HepG2 (cell line): ENCODE measurements at regions of chr9 and their contacts with region 1.

Region 1: GRCh38 chr9:129495534-129496325 is 125.2 kb downstream of the C9orf50 start:
- DNase-seq: peak; percentile 86
- ATAC-seq: peak; percentile 75
- H3K4me3 ChIP-seq: peak overlapping the region; percentile 56 to 79 (median 61)
- H3K27ac ChIP-seq: peak overlapping the region; percentile 92
- H3K4me1 ChIP-seq: peaks cover 79% of the 10 kb centered on the region
- H3K27me3 ChIP-seq: no peaks in the 10 kb centered on the region
- CTCF ChIP-seq: peak; percentile 50
- EP300 ChIP-seq: no peak
- POLR2A ChIP-seq: no peak; a peak in 1 of 4 replicates
- RAD21 ChIP-seq: peak; percentile 30; the same call in 1 of the 2 replicates

Region 2: DNA sequence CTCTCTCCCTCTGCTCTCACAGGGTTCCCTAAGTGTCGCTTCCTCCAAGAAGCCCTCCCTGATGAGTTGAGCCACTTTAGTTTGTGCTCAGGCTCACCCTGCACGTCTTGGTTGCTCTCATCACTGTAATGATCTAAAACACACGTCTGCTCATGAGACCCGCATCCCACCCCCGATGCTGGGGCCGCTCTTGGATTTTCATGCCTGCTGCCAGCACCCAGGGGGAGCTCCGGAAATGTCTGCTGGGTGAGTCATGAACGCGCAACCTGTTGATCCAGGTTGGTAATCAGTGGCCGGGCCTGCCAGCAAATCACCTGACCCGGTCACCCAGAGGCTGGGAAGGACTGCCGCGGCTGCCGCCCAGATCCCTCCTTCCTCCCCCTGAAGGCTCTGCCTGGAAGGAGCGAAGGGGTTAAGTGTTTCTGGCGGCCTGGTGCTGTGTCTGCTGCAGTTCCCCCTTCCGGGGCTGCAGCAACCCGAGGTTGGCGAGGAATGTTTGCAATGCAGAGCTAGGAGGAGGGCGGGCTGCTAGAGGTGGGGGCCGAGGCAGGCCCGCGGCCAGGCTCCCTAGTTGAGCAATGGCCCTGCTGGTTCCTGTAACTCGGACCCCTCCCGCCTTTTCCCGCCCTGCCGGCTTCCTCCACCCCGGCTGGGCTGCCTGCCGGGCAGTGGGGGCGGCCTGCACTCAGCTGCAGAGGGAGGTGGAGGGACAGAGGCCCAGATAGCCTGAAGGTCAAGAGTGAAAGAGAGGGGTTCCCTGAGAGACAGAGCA is 161.6 kb before region 1 on chr9:
- CTCF ChIA-PET with region 1: no interaction called
- POLR2A ChIA-PET with region 1: interaction called, 22 read pairs
- in situ Hi-C with region 1: no loop called
- intact Hi-C with region 1: no loop called
- DNase-seq: peak; percentile 94
- ATAC-seq: peak; percentile 93
- H3K4me3 ChIP-seq: peak overlapping the region in 2 of 3 experiments; percentile 30 to 65; a peak in 4 of 6 replicates
- H3K27ac ChIP-seq: peak overlapping the region; percentile 93
- H3K4me1 ChIP-seq: peaks cover 56% of the 10 kb centered on the region
- H3K27me3 ChIP-seq: no peaks in the 10 kb centered on the region
- CTCF ChIP-seq: peak; percentile 47; the same call in 1 of the 2 replicates
- EP300 ChIP-seq: peak in 1 of 2 experiments; percentile 84; a peak in 2 of 4 replicates
- POLR2A ChIP-seq: no peak
- RAD21 ChIP-seq: peak; percentile 75

Region 3: DNA sequence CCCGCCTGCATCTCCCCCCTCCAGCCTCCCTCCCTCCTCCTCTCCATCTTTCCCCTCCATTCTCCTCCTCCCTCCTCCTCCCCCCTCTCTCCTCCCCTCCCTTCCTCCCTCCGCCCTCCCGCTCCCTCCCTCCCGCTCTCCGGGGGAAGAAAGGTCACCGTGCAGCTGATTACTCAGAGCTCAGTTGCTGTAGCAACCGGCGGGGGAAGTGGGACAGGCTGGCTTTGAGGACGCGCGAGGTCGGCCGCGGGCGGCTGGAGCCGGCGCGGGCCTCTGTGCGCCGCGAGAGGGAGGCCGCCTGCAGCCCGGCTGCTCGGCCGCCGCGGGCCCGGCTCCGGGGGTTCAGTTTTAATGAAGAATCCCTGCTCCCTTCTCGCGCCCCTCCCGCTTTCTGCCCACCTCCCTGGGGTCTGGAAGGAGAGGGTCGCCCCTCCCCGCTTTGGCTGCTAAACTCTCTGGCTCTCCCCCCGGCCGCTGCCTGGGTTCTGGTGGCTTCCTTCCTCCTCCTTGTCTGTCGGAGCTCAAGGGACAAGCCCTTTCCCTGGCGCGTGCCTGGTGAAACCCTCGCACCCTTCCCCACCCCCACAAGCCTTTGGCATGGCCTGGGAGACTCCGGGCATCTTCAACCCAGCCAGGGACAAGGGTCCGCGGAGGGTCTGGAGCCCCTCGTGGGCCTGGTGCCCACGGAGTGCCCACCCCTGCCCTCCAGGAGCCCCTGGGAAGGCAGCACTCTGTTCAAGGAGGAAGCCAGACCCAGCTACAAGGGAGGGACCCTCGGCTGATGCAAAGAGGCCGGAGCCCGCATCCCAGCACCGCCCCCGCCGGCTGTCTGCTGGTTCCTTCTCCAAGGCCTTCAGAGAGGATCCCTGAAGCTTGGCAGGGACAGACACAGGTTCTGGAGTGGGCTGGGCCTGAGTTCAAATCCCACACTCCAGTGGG is 35.1 kb before region 1 on chr9:
- CTCF ChIA-PET with region 1: no interaction called
- POLR2A ChIA-PET with region 1: interaction called, 53 read pairs
- in situ Hi-C with region 1: no loop called
- intact Hi-C with region 1: no loop called
- DNase-seq: peak; percentile 94
- ATAC-seq: peak; percentile 82
- H3K4me3 ChIP-seq: peak overlapping the region; percentile 49 to 78 (median 57)
- H3K27ac ChIP-seq: peak overlapping the region; percentile 73
- H3K4me1 ChIP-seq: peaks cover 47% of the 10 kb centered on the region
- H3K27me3 ChIP-seq: peaks cover 4 to 10% of the 10 kb centered on the region in 2 experiments; a peak in 3 of 5 replicates
- CTCF ChIP-seq: peak; percentile 18; the same call in 1 of the 2 replicates
- EP300 ChIP-seq: peak in 1 of 2 experiments; percentile 78; a peak in 3 of 4 replicates
- POLR2A ChIP-seq: peak; percentile 58 to 60; a peak in 3 of 4 replicates
- RAD21 ChIP-seq: peak; percentile 78

Region 4: GRCh38 chr9:129557192-129558036 is 61.7 kb after region 1 on chr9:
- CTCF ChIA-PET with region 1: no interaction called
- POLR2A ChIA-PET with region 1: interaction called, 134 read pairs
- in situ Hi-C with region 1: no loop called
- intact Hi-C with region 1: loop called (anchors 5 kb)
- DNase-seq: peak; percentile 97
- ATAC-seq: peak; percentile 82
- H3K4me3 ChIP-seq: peak overlapping the region; percentile 8 to 65 (median 44); a peak in 5 of 6 replicates
- H3K27ac ChIP-seq: peak overlapping the region; percentile 95
- H3K4me1 ChIP-seq: peaks cover 97% of the 10 kb centered on the region
- H3K27me3 ChIP-seq: no peaks in the 10 kb centered on the region
- CTCF ChIP-seq: 0 out of 2 replicates have a peak, but pooled peaks have one; percentile 5
- EP300 ChIP-seq: peak; percentile 78 to 98; a peak in 3 of 4 replicates
- POLR2A ChIP-seq: peak in 1 of 2 experiments; percentile 49; a peak in 2 of 4 replicates
- RAD21 ChIP-seq: peak; percentile 78

Region 5: GRCh38 chr9:129597355-129598088 is 101.8 kb after region 1 on chr9:
- CTCF ChIA-PET with region 1: no interaction called
- POLR2A ChIA-PET with region 1: interaction called, 61 read pairs
- in situ Hi-C with region 1: no loop called
- intact Hi-C with region 1: no loop called
- DNase-seq: peak; percentile 93
- ATAC-seq: peak; percentile 80
- H3K4me3 ChIP-seq: peak overlapping the region; percentile 15 to 76 (median 47); a peak in 5 of 6 replicates
- H3K27ac ChIP-seq: peak overlapping the region; percentile 99
- H3K4me1 ChIP-seq: peaks cover 85% of the 10 kb centered on the region
- H3K27me3 ChIP-seq: no peaks in the 10 kb centered on the region
- CTCF ChIP-seq: no peak
- EP300 ChIP-seq: peak; percentile 91 to 96; a peak in 3 of 4 replicates
- POLR2A ChIP-seq: peak; percentile 68 to 79
- RAD21 ChIP-seq: peak; percentile 67